ENCODE measurements at regions of chr4 and their contacts with region 1.

Region 1: GRCh38 chr4:26150948-26151347 is 169.9 kb upstream of the RBPJ start:
- DNase-seq: no peak
- H3K4me3 ChIP-seq: no peak overlapping the region
- H3K27ac ChIP-seq: peak overlapping the region in 8 of 59 donors; percentile 3 to 62 (median 46)
- H3K27me3 ChIP-seq: no peaks in the 10 kb centered on the region
- CTCF ChIP-seq: no peak

Region 2: DNA sequence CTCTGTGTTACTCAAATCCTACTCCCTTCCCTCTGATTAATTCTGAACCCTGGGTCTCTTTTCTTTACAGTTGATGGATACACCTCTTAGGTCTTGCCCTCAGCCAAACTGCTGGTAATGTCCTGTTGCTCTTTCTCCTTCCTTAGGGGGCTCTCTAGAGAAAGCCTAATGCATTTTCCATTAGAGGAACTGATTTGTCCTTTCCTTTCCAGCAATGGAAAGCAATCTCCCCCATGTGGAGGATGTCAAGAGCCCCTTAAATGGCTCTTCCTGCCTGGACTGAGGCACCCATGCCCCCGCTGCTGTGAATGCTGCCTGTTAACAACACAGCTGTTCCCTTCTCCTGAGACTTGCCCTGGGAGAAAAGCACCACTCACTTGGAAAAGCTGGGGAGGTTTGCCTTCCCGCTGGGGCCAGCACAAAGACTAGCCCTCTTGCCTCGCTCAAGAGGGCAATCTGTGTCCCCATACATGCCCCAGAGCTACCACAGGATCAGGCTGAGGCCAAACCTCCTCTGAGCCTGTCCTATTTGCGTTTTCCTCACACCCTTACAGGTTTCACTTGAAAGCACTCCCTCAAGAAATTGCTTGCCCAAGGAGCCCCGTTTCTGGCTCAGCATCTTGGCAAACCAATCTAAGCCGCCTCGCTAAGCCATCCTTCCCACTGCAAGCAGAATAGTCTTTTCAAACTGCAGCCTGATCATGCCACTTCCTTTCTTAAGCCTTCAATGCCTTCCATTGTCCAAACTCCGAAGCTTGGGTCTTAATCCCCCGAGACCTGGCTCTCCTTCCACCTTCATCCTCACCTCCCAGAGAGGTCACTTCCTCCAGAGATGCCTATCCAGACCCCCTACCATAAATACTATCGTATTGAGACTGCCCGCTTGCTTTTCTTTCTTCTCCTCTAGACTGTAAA is 260.1 kb before region 1 on chr4:
- intact Hi-C with region 1: no loop called
- DNase-seq: peak in 3 of 10 donors; percentile 43 to 51 (median 44)
- H3K4me3 ChIP-seq: peak overlapping the region in 1 of 59 donors; percentile 3
- H3K27ac ChIP-seq: peak overlapping the region in 22 of 59 donors; percentile 9 to 72 (median 36)
- H3K27me3 ChIP-seq: no peaks in the 10 kb centered on the region
- CTCF ChIP-seq: no peak

Region 3: DNA sequence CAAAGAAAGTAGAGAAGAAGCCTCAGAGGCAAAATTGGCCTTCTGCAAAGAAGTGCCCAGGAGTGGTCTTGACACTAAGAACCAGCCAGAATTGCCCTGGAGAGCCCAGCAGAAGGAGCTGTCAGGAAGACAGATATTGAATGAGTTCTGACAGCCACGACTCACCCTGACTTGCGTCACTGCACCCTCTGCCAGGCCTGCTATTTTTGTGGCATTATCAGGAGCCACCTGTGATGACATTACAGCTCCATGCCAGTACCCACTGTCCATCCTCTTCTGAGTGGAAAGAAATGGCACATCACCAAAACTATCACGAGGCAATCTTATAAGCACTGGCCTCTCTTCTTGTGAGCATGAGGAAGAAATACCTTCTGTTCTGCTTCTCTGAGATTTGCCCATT is 169.2 kb before region 1 on chr4:
- intact Hi-C with region 1: loop called in 1 of 2 experiments (anchors 10 kb)
- DNase-seq: no peak
- H3K4me3 ChIP-seq: no peak overlapping the region
- H3K27ac ChIP-seq: no peak overlapping the region
- H3K27me3 ChIP-seq: no peaks in the 10 kb centered on the region
- CTCF ChIP-seq: no peak

Region 4: GRCh38 chr4:26206339-26206738 is 55.4 kb after region 1 on chr4:
- intact Hi-C with region 1: no loop called
- DNase-seq: no peak
- H3K4me3 ChIP-seq: no peak overlapping the region
- H3K27ac ChIP-seq: peak overlapping the region in 54 of 59 donors; percentile 11 to 100 (median 96)
- H3K27me3 ChIP-seq: peaks cover 0 to 11% (median 0%) of the 10 kb centered on the region in 45 donors
- CTCF ChIP-seq: no peak

Measured in dorsolateral prefrontal cortex (tissue), 120 donors.